A673 (cell line): ENCODE measurements at regions of chr1 and their contacts with region 1.

Region 1: DNA sequence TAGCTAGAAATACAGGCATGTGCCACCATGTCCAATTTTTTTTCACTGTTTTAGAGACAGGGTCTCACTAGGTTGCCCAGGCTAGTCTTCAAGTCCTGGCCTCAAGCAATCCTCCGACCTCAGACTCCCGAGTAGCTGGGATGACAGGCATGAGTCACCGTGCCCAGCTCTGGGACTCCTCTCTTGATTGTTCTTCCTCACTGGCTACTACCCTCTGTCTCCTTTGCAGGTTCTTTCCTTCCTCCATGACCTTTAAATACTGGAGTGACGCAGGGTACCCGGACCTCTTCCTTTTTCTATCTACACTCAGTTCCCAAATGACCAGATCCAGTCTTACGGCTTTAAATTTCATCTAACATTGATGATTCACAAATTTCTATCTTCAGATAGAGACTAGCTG is 34.9 kb downstream of the ASH1L start:
- DNase-seq: no peak
- H3K4me3 ChIP-seq: no peak overlapping the region
- H3K27ac ChIP-seq: no peak overlapping the region
- H3K4me1 ChIP-seq: no peaks in the 10 kb centered on the region
- H3K27me3 ChIP-seq: no peaks in the 10 kb centered on the region
- CTCF ChIP-seq: no peak

Region 2: GRCh38 chr1:155135415-155136028 is 392.2 kb before region 1 on chr1 and contains the start of gene SLC50A1:
- CTCF ChIA-PET with region 1: no interaction called
- POLR2A ChIA-PET with region 1: interaction called, 14 read pairs
- intact Hi-C with region 1: no loop called
- DNase-seq: peak; percentile 96
- H3K4me3 ChIP-seq: peak within 1 kb of the TSS; percentile 79
- H3K27ac ChIP-seq: peak within 1 kb of the TSS; percentile 88
- H3K4me1 ChIP-seq: peaks cover 19% of the 10 kb centered on the region
- H3K27me3 ChIP-seq: no peaks in the 10 kb centered on the region
- CTCF ChIP-seq: no peak
- total RNA-seq, gene SLC50A1: 30.3 and 33.8 TPM in 2 replicates

Region 3: GRCh38 chr1:155548706-155549105 is 21.0 kb after region 1 on chr1:
- CTCF ChIA-PET with region 1: no interaction called
- POLR2A ChIA-PET with region 1: no interaction called
- intact Hi-C with region 1: no loop called
- DNase-seq: no peak
- H3K4me3 ChIP-seq: no peak overlapping the region
- H3K27ac ChIP-seq: no peak overlapping the region
- H3K4me1 ChIP-seq: no peaks in the 10 kb centered on the region
- H3K27me3 ChIP-seq: no peaks in the 10 kb centered on the region
- CTCF ChIP-seq: no peak

Region 4: GRCh38 chr1:155669233-155670162 is 141.8 kb after region 1 on chr1:
- CTCF ChIA-PET with region 1: no interaction called
- POLR2A ChIA-PET with region 1: no interaction called
- intact Hi-C with region 1: no loop called
- DNase-seq: no peak
- H3K4me3 ChIP-seq: no peak overlapping the region
- H3K27ac ChIP-seq: no peak overlapping the region
- H3K4me1 ChIP-seq: no peaks in the 10 kb centered on the region
- H3K27me3 ChIP-seq: no peaks in the 10 kb centered on the region
- CTCF ChIP-seq: no peak